ENCODE measurements at regions of chr14 and their contacts with region 1.

Region 1: GRCh38 chr14:69460093-69460701 is 24.3 kb upstream of the PLEKHD1 start:
- DNase-seq: peak; percentile 90
- H3K4me3 ChIP-seq: no peak overlapping the region
- H3K27ac ChIP-seq: peak overlapping the region; percentile 28
- H3K4me1 ChIP-seq: peaks cover 16% of the 10 kb centered on the region
- H3K27me3 ChIP-seq: no peaks in the 10 kb centered on the region
- CTCF ChIP-seq: peak; percentile 60 to 74
- POLR2A ChIP-seq: no peak

Region 2: DNA sequence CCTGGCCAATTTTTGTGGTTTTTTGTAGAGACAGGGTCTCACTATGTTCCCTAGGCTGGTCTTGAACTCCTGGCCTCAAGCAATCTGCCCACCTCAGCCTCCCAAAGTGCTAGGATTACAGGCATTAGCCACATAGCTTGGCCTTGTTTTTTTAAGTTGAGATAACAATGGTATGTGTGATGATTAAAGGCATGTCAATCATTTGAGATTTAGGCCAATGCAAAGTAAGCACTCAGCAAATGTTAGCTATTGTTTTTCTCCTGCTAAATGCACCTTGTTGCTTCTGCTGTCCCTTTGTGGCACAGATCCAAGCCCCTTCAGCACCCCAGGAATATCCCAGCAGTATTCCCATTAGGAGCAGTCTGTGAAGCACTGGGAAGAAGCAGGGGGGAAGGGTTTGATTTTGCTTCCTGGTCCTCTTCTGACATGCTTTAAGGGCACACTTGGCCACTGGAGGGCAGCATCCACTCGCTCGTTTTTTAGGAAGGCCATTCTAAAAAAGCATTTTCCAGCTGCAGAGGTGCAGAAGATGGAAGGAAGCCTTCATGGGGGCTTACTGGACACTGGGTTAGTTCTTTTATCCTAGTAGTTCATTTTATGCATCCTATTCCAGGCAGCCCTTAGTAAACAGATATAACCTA is 597.1 kb before region 1 on chr14:
- CTCF ChIA-PET with region 1: interaction called, 3 read pairs
- POLR2A ChIA-PET with region 1: no interaction called
- dilution Hi-C with region 1: no loop called
- intact Hi-C with region 1: loop called (anchors 2 kb)
- DNase-seq: peak; percentile 83
- H3K4me3 ChIP-seq: no peak overlapping the region
- H3K27ac ChIP-seq: no peak overlapping the region
- H3K4me1 ChIP-seq: no peaks in the 10 kb centered on the region
- H3K27me3 ChIP-seq: no peaks in the 10 kb centered on the region
- CTCF ChIP-seq: peak; percentile 77 to 78
- POLR2A ChIP-seq: no peak

Region 3: GRCh38 chr14:69153131-69153872 is 306.9 kb before region 1 on chr14:
- CTCF ChIA-PET with region 1: interaction called, 3 read pairs
- POLR2A ChIA-PET with region 1: no interaction called
- dilution Hi-C with region 1: no loop called
- intact Hi-C with region 1: loop called (anchors 10 kb)
- DNase-seq: peak; percentile 89
- H3K4me3 ChIP-seq: peak overlapping the region; percentile 81 to 97 (median 83)
- H3K27ac ChIP-seq: peak overlapping the region; percentile 55
- H3K4me1 ChIP-seq: peaks cover 26% of the 10 kb centered on the region
- H3K27me3 ChIP-seq: no peaks in the 10 kb centered on the region
- CTCF ChIP-seq: no peak
- POLR2A ChIP-seq: peak; percentile 61

Region 4: GRCh38 chr14:69247676-69248440 is 212.3 kb before region 1 on chr14:
- CTCF ChIA-PET with region 1: interaction called, 59 read pairs
- POLR2A ChIA-PET with region 1: no interaction called
- dilution Hi-C with region 1: no loop called
- intact Hi-C with region 1: no loop called
- DNase-seq: no peak
- H3K4me3 ChIP-seq: no peak overlapping the region
- H3K27ac ChIP-seq: no peak overlapping the region
- H3K4me1 ChIP-seq: no peaks in the 10 kb centered on the region
- H3K27me3 ChIP-seq: no peaks in the 10 kb centered on the region
- CTCF ChIP-seq: peak in 1 of 2 donors; percentile 4
- POLR2A ChIP-seq: no peak

Region 5: DNA sequence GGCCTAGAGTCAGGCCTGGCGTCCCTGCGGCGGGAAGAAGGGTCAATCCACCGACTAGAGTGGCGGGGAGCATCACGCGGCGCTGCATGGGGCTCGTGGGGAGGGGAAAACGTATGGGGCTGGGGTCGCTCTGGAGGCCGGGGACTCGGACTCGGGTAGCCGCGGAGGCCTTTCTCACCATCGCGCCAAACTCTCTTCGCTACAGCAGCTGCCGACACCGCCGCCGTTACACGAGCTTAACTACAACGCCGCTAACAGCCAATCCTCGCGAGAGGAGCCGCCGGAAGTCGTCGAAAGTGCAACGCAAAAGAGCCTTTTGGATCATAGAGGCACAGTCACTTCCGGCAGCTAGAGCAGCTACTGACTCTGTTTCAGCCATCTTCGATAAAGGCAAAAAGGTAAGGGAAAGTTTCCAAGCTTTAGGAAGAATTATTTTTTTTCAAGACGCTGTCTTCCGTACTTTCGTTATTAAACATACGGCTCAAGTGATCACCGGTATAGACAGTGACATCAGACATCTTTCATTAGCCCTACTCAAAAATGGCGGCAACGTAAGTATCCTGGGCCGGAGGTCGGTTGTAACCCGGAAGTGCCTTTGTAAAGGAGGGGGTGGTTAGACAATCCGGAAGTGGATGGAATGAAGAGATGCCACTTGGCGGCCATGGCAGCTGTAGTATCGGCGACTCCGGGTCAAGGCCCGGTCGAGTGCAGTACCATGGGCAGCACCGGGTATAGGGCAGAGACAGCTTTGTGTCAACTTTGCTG is 62.0 kb before region 1 on chr14 and contains the starts of genes ERH and SLC39A9:
- CTCF ChIA-PET with region 1: interaction called, 26 read pairs
- POLR2A ChIA-PET with region 1: interaction called, 4 read pairs
- dilution Hi-C with region 1: no loop called
- intact Hi-C with region 1: loop called (anchors 1 kb)
- DNase-seq: peak; percentile 98
- H3K4me3 ChIP-seq: peak within 1 kb of the TSS; percentile 13 to 100 (median 84)
- H3K27ac ChIP-seq: peak within 1 kb of the TSS; percentile 92
- H3K4me1 ChIP-seq: peaks cover 31% of the 10 kb centered on the region
- H3K27me3 ChIP-seq: no peaks in the 10 kb centered on the region
- CTCF ChIP-seq: no peak
- POLR2A ChIP-seq: peak; percentile 84
- total RNA-seq, gene ERH: 263 and 273 TPM in 2 replicates
- total RNA-seq, gene SLC39A9: 52.1 and 55.2 TPM in 2 replicates

Region 6: GRCh38 chr14:69475194-69475818 is 15.1 kb after region 1 on chr14:
- CTCF ChIA-PET with region 1: interaction called, 27 read pairs
- POLR2A ChIA-PET with region 1: no interaction called
- dilution Hi-C with region 1: no loop called
- intact Hi-C with region 1: no loop called
- DNase-seq: peak; percentile 25
- H3K4me3 ChIP-seq: no peak overlapping the region
- H3K27ac ChIP-seq: no peak overlapping the region
- H3K4me1 ChIP-seq: no peaks in the 10 kb centered on the region
- H3K27me3 ChIP-seq: peaks cover 0 to 3% of the 10 kb centered on the region in 2 experiments
- CTCF ChIP-seq: peak; percentile 25 to 34
- POLR2A ChIP-seq: no peak

Region 7: GRCh38 chr14:69574263-69574953 is 114.2 kb after region 1 on chr14 and contains the start of gene CCDC177:
- CTCF ChIA-PET with region 1: no interaction called
- POLR2A ChIA-PET with region 1: no interaction called
- dilution Hi-C with region 1: no loop called
- intact Hi-C with region 1: no loop called
- DNase-seq: peak; percentile 51
- H3K4me3 ChIP-seq: no peak within 1 kb of the TSS
- H3K27ac ChIP-seq: no peak within 1 kb of the TSS
- H3K4me1 ChIP-seq: peaks cover 9% of the 10 kb centered on the region
- H3K27me3 ChIP-seq: peaks cover 53 to 78% of the 10 kb centered on the region in 2 experiments
- CTCF ChIP-seq: peak; percentile 77 to 84
- POLR2A ChIP-seq: no peak
- total RNA-seq, gene CCDC177: not detected in 2 replicates

Region 8: GRCh38 chr14:70045844-70046535 is 585.8 kb after region 1 on chr14:
- CTCF ChIA-PET with region 1: no interaction called
- POLR2A ChIA-PET with region 1: no interaction called
- dilution Hi-C with region 1: no loop called
- intact Hi-C with region 1: no loop called
- DNase-seq: peak; percentile 56
- H3K4me3 ChIP-seq: no peak overlapping the region
- H3K27ac ChIP-seq: no peak overlapping the region
- H3K4me1 ChIP-seq: no peaks in the 10 kb centered on the region
- H3K27me3 ChIP-seq: peaks cover 0 to 3% of the 10 kb centered on the region in 2 experiments
- CTCF ChIP-seq: peak; percentile 56 to 91
- POLR2A ChIP-seq: no peak